ENCODE measurements at regions of chr18 and their contacts with region 1.

Region 1: GRCh38 chr18:65725251-65726050 is 25.4 kb upstream of the CDH7 start:
- DNase-seq: peak; percentile 16
- ATAC-seq: peak; percentile 92
- H3K4me3 ChIP-seq: no peak overlapping the region
- H3K27ac ChIP-seq: no peak overlapping the region
- H3K4me1 ChIP-seq: no peaks in the 10 kb centered on the region
- H3K27me3 ChIP-seq: no peaks in the 10 kb centered on the region
- CTCF ChIP-seq: peak; percentile 60
- EP300 ChIP-seq: no peak
- POLR2A ChIP-seq: no peak
- RAD21 ChIP-seq: peak; percentile 16; the same call in 1 of the 2 replicates

Region 2: GRCh38 chr18:65671621-65672415 is 53.6 kb before region 1 on chr18:
- CTCF ChIA-PET with region 1: no interaction called
- POLR2A ChIA-PET with region 1: no interaction called
- in situ Hi-C with region 1: no loop called
- intact Hi-C with region 1: no loop called
- DNase-seq: no peak
- ATAC-seq: no peak
- H3K4me3 ChIP-seq: no peak overlapping the region
- H3K27ac ChIP-seq: no peak overlapping the region
- H3K4me1 ChIP-seq: no peaks in the 10 kb centered on the region
- H3K27me3 ChIP-seq: no peaks in the 10 kb centered on the region
- CTCF ChIP-seq: no peak
- EP300 ChIP-seq: no peak
- POLR2A ChIP-seq: no peak
- RAD21 ChIP-seq: no peak

Region 3: DNA sequence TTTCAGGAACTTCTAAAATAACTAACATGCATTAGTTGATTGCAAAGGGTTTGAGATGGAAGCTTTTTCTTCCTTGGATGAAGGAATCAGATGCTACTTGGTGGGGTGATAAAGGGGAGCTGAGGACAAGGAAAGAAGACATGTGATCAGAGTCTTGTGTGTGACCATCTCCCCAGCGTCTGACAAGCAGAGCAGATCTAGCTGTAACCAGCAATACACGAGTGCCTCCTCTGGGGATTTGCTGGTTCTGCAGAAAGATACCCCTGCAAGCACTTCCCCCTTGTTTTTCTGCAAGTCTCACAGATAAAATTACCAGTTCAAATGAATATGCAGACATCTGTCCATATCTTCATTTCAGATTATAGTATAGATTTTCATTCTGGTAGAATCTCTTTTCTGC is 28.1 kb after region 1 on chr18:
- CTCF ChIA-PET with region 1: no interaction called
- POLR2A ChIA-PET with region 1: no interaction called
- in situ Hi-C with region 1: no loop called
- intact Hi-C with region 1: loop called (anchors 1 kb)
- DNase-seq: peak; percentile 31
- ATAC-seq: peak; percentile 93
- H3K4me3 ChIP-seq: no peak overlapping the region
- H3K27ac ChIP-seq: no peak overlapping the region
- H3K4me1 ChIP-seq: no peaks in the 10 kb centered on the region
- H3K27me3 ChIP-seq: 0 out of 5 replicates have a peak, but pooled peaks cover 0 to 6% of the 10 kb centered on the region in 2 experiments
- CTCF ChIP-seq: peak; percentile 52
- EP300 ChIP-seq: no peak
- POLR2A ChIP-seq: no peak
- RAD21 ChIP-seq: no peak

Region 4: DNA sequence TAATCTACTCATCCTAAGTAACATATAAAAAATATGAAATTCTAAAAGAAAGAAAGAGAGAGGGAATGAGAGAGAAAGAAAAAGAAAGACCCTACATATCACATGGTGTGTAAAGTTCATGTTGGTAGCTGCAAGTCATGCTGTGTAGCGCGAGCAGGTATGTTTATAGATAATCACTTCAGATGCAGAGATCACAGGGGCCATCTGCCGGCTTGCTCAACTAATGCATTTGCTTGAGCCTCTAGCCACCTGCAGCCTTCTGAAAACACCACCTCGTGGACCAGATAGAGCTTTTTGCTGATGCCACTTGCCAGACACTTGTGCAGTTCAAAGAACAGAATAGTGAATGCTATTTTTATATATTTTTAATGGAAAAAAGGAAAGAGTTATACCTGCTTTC is 62.9 kb after region 1 on chr18:
- CTCF ChIA-PET with region 1: no interaction called
- POLR2A ChIA-PET with region 1: no interaction called
- in situ Hi-C with region 1: no loop called
- intact Hi-C with region 1: loop called (anchors 2 kb)
- DNase-seq: peak; percentile 41
- ATAC-seq: peak; percentile 95
- H3K4me3 ChIP-seq: no peak overlapping the region
- H3K27ac ChIP-seq: no peak overlapping the region
- H3K4me1 ChIP-seq: no peaks in the 10 kb centered on the region
- H3K27me3 ChIP-seq: no peaks in the 10 kb centered on the region
- CTCF ChIP-seq: peak; percentile 49
- EP300 ChIP-seq: no peak
- POLR2A ChIP-seq: no peak
- RAD21 ChIP-seq: no peak